Panc1 (cell line): ENCODE measurements at regions of chr3 and their contacts with region 1.

Region 1: GRCh38 chr3:123518892-123519485 is 65.9 kb downstream of the HACD2 start:
- DNase-seq: no peak
- ATAC-seq: no peak
- H3K4me3 ChIP-seq: no peak overlapping the region
- H3K27ac ChIP-seq: no peak overlapping the region
- H3K4me1 ChIP-seq: no peaks in the 10 kb centered on the region
- H3K27me3 ChIP-seq: no peaks in the 10 kb centered on the region
- CTCF ChIP-seq: no peak

Region 2: GRCh38 chr3:123431658-123432324 is 87.2 kb before region 1 on chr3:
- CTCF ChIA-PET with region 1: no interaction called
- POLR2A ChIA-PET with region 1: interaction called, 16 read pairs
- in situ Hi-C with region 1: no loop called
- intact Hi-C with region 1: no loop called
- DNase-seq: no peak
- ATAC-seq: no peak
- H3K4me3 ChIP-seq: no peak overlapping the region
- H3K27ac ChIP-seq: no peak overlapping the region
- H3K4me1 ChIP-seq: no peaks in the 10 kb centered on the region
- H3K27me3 ChIP-seq: peaks cover 2% of the 10 kb centered on the region
- CTCF ChIP-seq: no peak